Activated B cell treated with CpG ODN at 0.5 μM for 24 hours (primary cell): ENCODE measurements at regions of chr17 and their contacts with region 1.

Region 1: GRCh38 chr17:74864866-74865395 is 5.2 kb upstream of the GRIN2C start:
- DNase-seq: peak; percentile 69
- ATAC-seq: peak; percentile 76
- H3K4me3 Mint-ChIP-seq: no peak overlapping the region
- H3K27ac Mint-ChIP-seq: no peak overlapping the region
- H3K4me1 Mint-ChIP-seq: peaks cover 25% of the 10 kb centered on the region
- H3K27me3 Mint-ChIP-seq: peaks cover 11% of the 10 kb centered on the region
- CTCF ChIP-seq: no peak

Region 2: DNA sequence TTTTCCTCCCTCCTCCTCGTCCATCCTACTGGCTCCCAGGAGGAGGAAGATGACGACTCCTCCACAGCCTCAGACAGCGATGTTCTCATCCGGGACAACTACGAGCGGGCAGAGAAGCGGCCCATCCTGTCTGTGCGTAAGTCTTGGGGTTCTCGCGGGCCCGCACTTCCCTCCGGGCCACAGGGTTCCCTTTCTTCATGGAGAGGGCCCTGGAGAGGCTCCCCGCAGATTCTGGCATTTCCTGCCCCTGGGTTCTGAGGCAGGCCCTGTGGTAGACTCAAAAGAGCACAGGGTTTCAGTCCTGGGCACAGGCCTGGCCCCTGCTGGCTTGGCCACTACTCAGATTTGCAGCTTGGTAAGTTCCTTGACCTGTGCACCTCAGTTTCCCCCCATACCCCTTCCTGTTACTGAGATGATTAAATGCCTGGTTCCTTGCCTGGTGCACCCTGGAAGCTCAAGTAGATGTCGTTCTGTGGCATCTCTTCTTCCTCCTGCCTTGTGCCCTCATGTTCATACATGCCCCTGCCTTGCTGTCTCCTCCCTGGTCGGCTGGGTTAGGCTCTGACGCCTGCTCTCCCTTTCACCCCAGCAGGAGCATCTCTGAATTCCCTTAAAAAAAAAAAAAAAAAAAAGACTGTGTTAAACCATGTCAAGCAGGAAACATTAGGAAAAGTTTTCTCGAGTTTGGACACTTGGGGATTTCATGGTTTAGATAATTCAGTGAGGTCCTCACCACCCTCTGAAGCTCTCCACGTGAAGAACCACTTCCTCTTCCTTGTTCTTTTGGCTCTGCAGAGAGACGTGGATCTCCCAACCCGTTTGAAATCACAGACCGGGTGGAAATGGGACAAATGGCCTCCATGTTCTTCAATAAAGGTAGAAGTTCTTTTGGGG is 74.5 kb before region 1 on chr17:
- CTCF ChIA-PET with region 1: interaction called, 95 read pairs
- POLR2A ChIA-PET with region 1: interaction called, 7 read pairs
- intact Hi-C with region 1: loop called (anchors 1 kb)
- DNase-seq: no peak
- ATAC-seq: no peak
- H3K4me3 Mint-ChIP-seq: no peak overlapping the region
- H3K27ac Mint-ChIP-seq: no peak overlapping the region
- H3K4me1 Mint-ChIP-seq: peaks cover 24% of the 10 kb centered on the region
- H3K27me3 Mint-ChIP-seq: no peaks in the 10 kb centered on the region
- CTCF ChIP-seq: no peak